WTC11 (cell line): ENCODE measurements at regions of chr1 and their contacts with region 1.

Region 1: DNA sequence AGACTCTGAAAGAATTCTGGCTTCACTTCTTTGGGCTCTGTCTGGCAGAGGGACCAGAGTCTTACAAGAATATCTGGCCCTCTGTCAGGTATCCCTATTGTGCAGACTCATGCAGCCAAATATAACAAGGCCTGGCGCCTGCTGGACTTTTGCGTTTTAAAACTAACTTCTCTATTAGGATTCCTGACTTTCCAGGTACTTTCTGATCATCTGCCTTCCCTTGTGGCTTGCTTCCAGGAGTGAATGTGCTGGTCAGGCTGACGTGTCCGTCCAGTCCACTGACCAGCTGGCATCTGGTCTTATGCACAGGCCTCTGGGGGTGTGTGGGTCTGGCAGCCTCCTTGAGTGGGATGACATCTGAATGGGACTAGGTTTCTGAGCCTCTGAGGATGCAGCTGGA is 8.6 kb upstream of the RAB29 start:
- DNase-seq: no peak
- ATAC-seq: no peak
- H3K4me3 Mint-ChIP-seq: no peak overlapping the region
- H3K27ac Mint-ChIP-seq: no peak overlapping the region
- H3K4me1 Mint-ChIP-seq: no peaks in the 10 kb centered on the region
- H3K27me3 Mint-ChIP-seq: peaks cover 9% of the 10 kb centered on the region
- CTCF ChIP-seq: no peak

Region 2: GRCh38 chr1:205693421-205693991 is 90.4 kb before region 1 on chr1:
- CTCF ChIA-PET with region 1: no interaction called
- POLR2A ChIA-PET with region 1: no interaction called
- DNase-seq: no peak
- ATAC-seq: peak; percentile 53
- H3K4me3 Mint-ChIP-seq: no peak overlapping the region
- H3K27ac Mint-ChIP-seq: peak overlapping the region; percentile 24; the same call in 1 of the 2 replicates
- H3K4me1 Mint-ChIP-seq: peaks cover 20% of the 10 kb centered on the region
- H3K27me3 Mint-ChIP-seq: no peaks in the 10 kb centered on the region
- CTCF ChIP-seq: no peak

Region 3: GRCh38 chr1:205749234-205750137 is 34.4 kb before region 1 on chr1:
- CTCF ChIA-PET with region 1: interaction called, 3 read pairs
- POLR2A ChIA-PET with region 1: interaction called, 10 read pairs
- DNase-seq: peak; percentile 97
- ATAC-seq: peak; percentile 88
- H3K4me3 Mint-ChIP-seq: peak overlapping the region; percentile 97
- H3K27ac Mint-ChIP-seq: peak overlapping the region; percentile 99
- H3K4me1 Mint-ChIP-seq: peaks cover 47% of the 10 kb centered on the region
- H3K27me3 Mint-ChIP-seq: no peaks in the 10 kb centered on the region; the same call in 1 of the 2 replicates
- CTCF ChIP-seq: no peak